ENCODE measurements at regions of chr3 and their contacts with region 1.

Region 1: GRCh38 chr3:119676771-119677640 is at the start of gene COX17:
- DNase-seq: peak; percentile 62
- H3K4me3 ChIP-seq: peak within 1 kb of the TSS; percentile 50 to 52
- H3K27ac ChIP-seq: peak within 1 kb of the TSS; percentile 29 to 81
- H3K4me1 ChIP-seq: peaks cover 0 to 27% of the 10 kb centered on the region in 2 experiments; a peak in 2 of 4 replicates
- H3K27me3 ChIP-seq: no peaks in the 10 kb centered on the region
- CTCF ChIP-seq: no peak
- EP300 ChIP-seq: no peak
- RAD21 ChIP-seq: no peak; the same call in 1 of the 2 replicates
- polyA plus RNA-seq, gene COX17: 15.1 and 21.5 TPM in 2 replicates

Region 2: GRCh38 chr3:119293871-119294695 is 382.9 kb before region 1 on chr3 and contains the start of gene ARHGAP31:
- CTCF ChIA-PET with region 1: interaction called, 13 read pairs
- POLR2A ChIA-PET with region 1: no interaction called
- DNase-seq: peak; percentile 79
- H3K4me3 ChIP-seq: peak within 1 kb of the TSS; percentile 81 to 90
- H3K27ac ChIP-seq: peak within 1 kb of the TSS; percentile 90 to 91
- H3K4me1 ChIP-seq: peaks cover 12 to 48% of the 10 kb centered on the region in 2 experiments; a peak in 3 of 4 replicates
- H3K27me3 ChIP-seq: no peaks in the 10 kb centered on the region
- CTCF ChIP-seq: no peak
- EP300 ChIP-seq: no peak
- RAD21 ChIP-seq: no peak
- polyA plus RNA-seq, gene ARHGAP31: 4.4 and 7.7 TPM in 2 replicates

Region 3: GRCh38 chr3:119463171-119464169 is 213.5 kb before region 1 on chr3 and contains the start of gene TMEM39A:
- CTCF ChIA-PET with region 1: interaction called, 24 read pairs
- POLR2A ChIA-PET with region 1: interaction called, 6 read pairs
- DNase-seq: peak; percentile 98
- H3K4me3 ChIP-seq: peak within 1 kb of the TSS; percentile 99 to 100
- H3K27ac ChIP-seq: peak within 1 kb of the TSS; percentile 90 to 96
- H3K4me1 ChIP-seq: peaks cover 11 to 15% of the 10 kb centered on the region in 2 experiments
- H3K27me3 ChIP-seq: no peaks in the 10 kb centered on the region
- CTCF ChIP-seq: no peak
- EP300 ChIP-seq: no peak
- RAD21 ChIP-seq: no peak; the same call in 1 of the 2 replicates
- polyA plus RNA-seq, gene TMEM39A: 13.2 and 19.0 TPM in 2 replicates

Region 4: DNA sequence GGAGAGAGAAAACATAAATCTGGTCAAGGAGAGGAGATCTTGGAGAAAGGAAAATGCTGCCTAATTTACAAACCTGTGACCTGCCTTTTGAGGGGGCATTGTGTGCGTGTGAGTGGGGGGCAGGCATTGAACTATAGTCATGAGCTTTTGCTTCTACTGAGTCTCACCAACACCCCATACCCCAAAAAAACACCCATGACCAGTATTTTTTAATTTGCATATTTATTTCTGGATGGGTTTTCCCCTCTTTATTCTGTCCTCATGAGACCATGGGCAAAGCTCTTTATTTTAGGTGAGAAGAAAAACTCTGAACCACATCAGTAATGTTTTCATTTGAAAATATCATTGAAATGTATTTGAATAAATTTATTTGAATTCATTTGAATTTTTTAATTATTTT is 138.2 kb before region 1 on chr3:
- CTCF ChIA-PET with region 1: no interaction called
- POLR2A ChIA-PET with region 1: no interaction called
- DNase-seq: no peak
- H3K4me3 ChIP-seq: no peak overlapping the region
- H3K27ac ChIP-seq: no peak overlapping the region
- H3K4me1 ChIP-seq: no peaks in the 10 kb centered on the region
- H3K27me3 ChIP-seq: no peaks in the 10 kb centered on the region
- CTCF ChIP-seq: no peak
- EP300 ChIP-seq: no peak
- RAD21 ChIP-seq: no peak

Region 5: GRCh38 chr3:119662604-119663373 is 14.2 kb before region 1 on chr3:
- CTCF ChIA-PET with region 1: interaction called, 21 read pairs
- POLR2A ChIA-PET with region 1: interaction called, 11 read pairs
- DNase-seq: no peak
- H3K4me3 ChIP-seq: 0 out of 4 replicates have a peak overlapping the region, but pooled peaks of 1 of the 2 experiments have one; percentile 2
- H3K27ac ChIP-seq: peak overlapping the region; percentile 93 to 98
- H3K4me1 ChIP-seq: peaks cover 40 to 58% of the 10 kb centered on the region in 2 experiments
- H3K27me3 ChIP-seq: no peaks in the 10 kb centered on the region
- CTCF ChIP-seq: peak; percentile 42
- EP300 ChIP-seq: peak in 1 of 2 experiments; percentile 47; a peak in 1 of 4 replicates
- RAD21 ChIP-seq: no peak

Region 6: DNA sequence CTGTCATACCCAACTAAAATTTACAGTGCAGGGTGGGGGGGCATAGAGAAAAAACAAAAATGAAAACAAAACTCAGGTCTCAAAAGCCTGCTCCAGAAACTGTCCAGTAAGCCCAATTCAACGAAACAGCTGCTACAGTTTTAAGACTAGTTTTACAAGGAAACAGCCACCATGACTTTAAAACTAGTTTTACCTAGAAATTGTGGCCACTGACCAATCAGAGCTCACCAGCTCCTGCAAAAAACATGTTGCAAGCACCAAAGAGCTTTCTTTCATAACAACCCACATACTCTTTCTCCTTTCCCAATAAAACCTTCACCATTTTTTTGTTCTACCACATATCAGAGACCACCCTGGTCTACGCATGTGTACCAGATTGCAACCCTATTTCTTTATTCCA is 18.5 kb after region 1 on chr3:
- CTCF ChIA-PET with region 1: interaction called, 29 read pairs
- POLR2A ChIA-PET with region 1: no interaction called
- DNase-seq: no peak
- H3K4me3 ChIP-seq: no peak overlapping the region
- H3K27ac ChIP-seq: no peak overlapping the region
- H3K4me1 ChIP-seq: no peaks in the 10 kb centered on the region
- H3K27me3 ChIP-seq: no peaks in the 10 kb centered on the region
- CTCF ChIP-seq: no peak
- EP300 ChIP-seq: peak in 1 of 2 experiments; percentile 40; a peak in 1 of 4 replicates
- RAD21 ChIP-seq: no peak

Region 7: DNA sequence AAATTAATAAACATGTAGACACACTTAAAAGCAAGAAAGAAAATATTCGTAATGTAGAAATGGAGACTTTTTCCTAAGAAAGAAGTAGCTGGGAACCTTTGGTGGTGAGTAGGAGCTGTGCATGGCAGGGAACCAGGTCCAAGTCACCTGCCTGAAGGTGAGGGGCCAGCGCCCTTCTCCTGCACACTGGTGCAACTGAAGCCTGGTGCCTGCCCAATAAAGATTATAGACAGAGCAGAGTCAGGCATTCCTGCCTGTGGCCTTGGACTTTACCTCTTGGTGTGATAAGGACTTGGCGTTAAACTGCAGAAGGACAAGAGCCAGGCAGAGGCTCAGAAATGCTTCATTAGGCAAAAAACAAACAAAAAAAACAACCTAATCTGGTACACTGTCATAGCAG is 40.0 kb after region 1 on chr3:
- CTCF ChIA-PET with region 1: no interaction called
- POLR2A ChIA-PET with region 1: no interaction called
- DNase-seq: no peak
- H3K4me3 ChIP-seq: no peak overlapping the region
- H3K27ac ChIP-seq: no peak overlapping the region
- H3K4me1 ChIP-seq: no peaks in the 10 kb centered on the region
- H3K27me3 ChIP-seq: no peaks in the 10 kb centered on the region
- CTCF ChIP-seq: no peak
- EP300 ChIP-seq: no peak
- RAD21 ChIP-seq: no peak

Region 8: GRCh38 chr3:119831022-119831421 is 154.0 kb after region 1 on chr3:
- CTCF ChIA-PET with region 1: no interaction called
- POLR2A ChIA-PET with region 1: no interaction called
- DNase-seq: no peak
- H3K4me3 ChIP-seq: no peak overlapping the region
- H3K27ac ChIP-seq: no peak overlapping the region
- H3K4me1 ChIP-seq: peaks cover 5 to 15% of the 10 kb centered on the region in 2 experiments; a peak in 3 of 4 replicates
- H3K27me3 ChIP-seq: no peaks in the 10 kb centered on the region
- CTCF ChIP-seq: peak; percentile 41
- EP300 ChIP-seq: no peak
- RAD21 ChIP-seq: no peak